Endothelial cell of umbilical vein (primary cell): ENCODE measurements at regions of chr2 and their contacts with region 1.

Region 1: DNA sequence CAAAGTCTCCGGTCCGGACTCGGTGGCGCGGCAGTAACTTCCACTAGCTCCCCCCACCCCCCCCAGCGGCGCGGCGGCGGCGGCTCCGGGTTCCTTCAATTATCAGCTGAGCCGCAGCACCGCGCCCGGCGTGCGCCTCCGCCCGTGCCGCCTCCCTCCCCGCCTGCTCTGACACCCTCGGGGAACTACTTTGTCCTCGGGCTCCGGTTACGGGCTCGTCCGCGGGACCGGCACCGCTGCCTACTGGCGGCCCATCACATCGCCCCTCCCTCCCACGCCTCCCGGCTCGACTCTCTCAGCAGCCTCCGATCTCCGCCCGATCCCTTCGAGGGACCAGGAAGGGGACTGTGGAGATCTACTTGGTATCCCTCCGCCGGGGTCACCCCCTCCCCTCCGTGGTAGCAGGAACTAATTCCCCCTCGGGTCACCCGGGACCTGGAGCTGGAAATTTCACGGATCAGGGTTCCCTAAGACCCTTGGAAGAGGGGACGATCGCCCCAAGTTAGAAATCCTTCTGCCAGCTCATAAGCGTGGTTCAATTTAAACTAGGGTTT is at the start of gene TRIP12:
- DNase-seq: peak; percentile 97
- H3K4me3 ChIP-seq: peak within 1 kb of the TSS; percentile 62 to 98 (median 90)
- H3K27ac ChIP-seq: peak within 1 kb of the TSS; percentile 91
- H3K4me1 ChIP-seq: peaks cover 12% of the 10 kb centered on the region
- H3K27me3 ChIP-seq: no peaks in the 10 kb centered on the region
- CTCF ChIP-seq: no peak
- POLR2A ChIP-seq: peak; percentile 62
- total RNA-seq, gene TRIP12: 256 and 278 TPM in 2 replicates

Region 2: DNA sequence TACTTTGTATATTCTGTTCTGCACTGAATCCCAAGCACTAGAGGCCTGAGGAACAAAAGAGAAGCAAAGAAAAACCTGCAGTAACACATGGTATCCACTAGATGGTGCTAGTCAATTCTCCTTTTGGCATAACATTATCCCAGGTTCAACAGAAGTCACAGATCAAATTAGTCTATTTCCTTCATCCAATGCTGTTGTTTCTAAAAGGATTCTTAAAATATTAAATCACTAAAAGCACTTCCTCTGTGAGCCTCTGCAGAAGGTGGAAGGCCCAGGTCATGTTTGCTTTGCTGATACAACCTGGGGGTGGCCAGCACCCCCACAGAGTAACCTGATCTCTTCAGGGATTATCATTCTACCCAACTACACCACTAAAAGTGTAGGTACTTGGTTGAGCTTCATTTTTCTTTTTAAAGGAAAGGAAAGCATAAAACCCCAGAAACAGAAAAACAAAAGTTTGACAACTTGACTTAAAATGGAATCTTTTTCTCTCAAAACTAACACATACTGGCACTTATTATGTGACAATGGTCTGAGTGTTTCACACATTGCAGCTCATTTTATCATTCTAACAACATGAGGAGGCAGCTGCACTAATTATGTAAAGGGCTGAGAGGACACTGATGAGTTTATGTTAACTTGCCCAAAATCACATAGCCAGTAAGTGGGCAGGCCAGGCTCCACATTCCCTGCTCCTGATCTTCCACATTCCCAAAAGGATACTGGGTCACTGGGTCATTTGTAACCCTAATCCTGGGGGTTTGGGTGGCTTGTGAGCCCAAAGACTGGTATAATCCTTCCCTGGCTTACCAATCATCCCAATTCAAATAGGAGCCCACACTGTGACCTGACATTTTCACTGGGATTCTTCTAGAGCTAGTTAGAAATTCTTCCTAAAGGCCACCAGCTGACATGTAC is 140.9 kb before region 1 on chr2:
- CTCF ChIA-PET with region 1: interaction called, 4 read pairs
- POLR2A ChIA-PET with region 1: no interaction called
- dilution Hi-C with region 1: no loop called
- intact Hi-C with region 1: loop called (anchors 2 kb)
- DNase-seq: peak; percentile 76
- H3K4me3 ChIP-seq: no peak overlapping the region
- H3K27ac ChIP-seq: peak overlapping the region; percentile 31
- H3K4me1 ChIP-seq: peaks cover 13% of the 10 kb centered on the region
- H3K27me3 ChIP-seq: no peaks in the 10 kb centered on the region
- CTCF ChIP-seq: peak; percentile 74 to 75
- POLR2A ChIP-seq: no peak

Region 3: GRCh38 chr2:229852565-229852964 is 69.4 kb before region 1 on chr2:
- CTCF ChIA-PET with region 1: no interaction called
- POLR2A ChIA-PET with region 1: interaction called, 3 read pairs
- dilution Hi-C with region 1: no loop called
- intact Hi-C with region 1: loop called (anchors 1 kb)
- DNase-seq: peak; percentile 97
- H3K4me3 ChIP-seq: peak overlapping the region in 1 of 3 experiments; percentile 37
- H3K27ac ChIP-seq: peak overlapping the region; percentile 77
- H3K4me1 ChIP-seq: peaks cover 57% of the 10 kb centered on the region
- H3K27me3 ChIP-seq: no peaks in the 10 kb centered on the region
- CTCF ChIP-seq: no peak
- POLR2A ChIP-seq: peak; percentile 28

Region 4: DNA sequence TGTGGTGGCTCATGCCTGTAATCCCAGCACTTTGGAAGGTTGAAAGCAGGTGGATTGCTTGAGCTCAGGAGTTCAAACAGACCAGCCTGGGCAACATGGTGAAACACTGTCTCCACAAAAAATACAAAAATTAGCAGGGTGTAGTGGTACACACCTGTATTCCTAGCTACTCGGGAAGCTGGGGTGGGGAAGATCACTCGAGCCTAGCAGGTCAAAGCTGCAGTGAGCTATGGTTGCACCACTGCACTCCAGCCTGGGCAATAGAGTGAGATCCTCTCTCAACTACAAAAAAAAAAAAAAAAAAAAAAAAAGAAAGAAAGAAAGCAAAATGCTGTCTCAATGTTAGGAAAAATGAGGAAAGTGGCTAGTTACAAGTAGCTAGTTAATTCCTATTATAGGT is 56.9 kb before region 1 on chr2:
- CTCF ChIA-PET with region 1: no interaction called
- POLR2A ChIA-PET with region 1: no interaction called
- dilution Hi-C with region 1: no loop called
- intact Hi-C with region 1: no loop called
- DNase-seq: no peak
- H3K4me3 ChIP-seq: no peak overlapping the region
- H3K27ac ChIP-seq: no peak overlapping the region
- H3K4me1 ChIP-seq: no peaks in the 10 kb centered on the region
- H3K27me3 ChIP-seq: no peaks in the 10 kb centered on the region
- CTCF ChIP-seq: no peak
- POLR2A ChIP-seq: no peak

Region 5: DNA sequence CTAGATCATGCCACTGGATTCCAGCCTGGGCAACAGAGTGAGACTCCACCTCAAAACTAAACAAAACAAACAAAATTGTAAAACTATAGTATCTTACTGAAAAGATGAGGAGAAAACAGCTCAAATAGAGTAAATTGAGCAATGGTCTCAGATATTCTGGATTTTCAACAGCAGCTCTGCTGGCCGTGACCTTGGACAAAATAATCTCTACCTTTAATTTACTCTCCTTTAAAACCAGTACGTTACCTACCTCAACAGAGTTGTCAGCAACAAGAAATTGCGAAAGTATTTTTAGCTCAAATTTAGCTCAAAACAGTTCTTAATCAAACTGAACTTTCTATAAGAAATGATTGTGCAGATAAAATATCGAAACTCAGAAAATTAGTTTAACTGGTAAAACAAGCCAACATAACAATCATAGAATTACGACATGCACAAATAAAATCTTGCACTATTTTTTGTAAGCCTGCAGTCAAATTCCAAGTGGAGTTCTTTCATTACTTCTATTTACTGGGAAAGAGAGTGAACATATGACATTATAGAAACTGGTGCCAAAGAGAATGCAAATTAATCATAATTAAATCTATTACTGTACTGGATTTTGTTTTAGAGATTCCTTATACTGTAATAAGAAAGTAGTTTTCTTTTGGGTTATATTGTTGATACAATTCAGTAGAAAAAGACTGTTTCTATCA is 40.9 kb before region 1 on chr2:
- CTCF ChIA-PET with region 1: no interaction called
- POLR2A ChIA-PET with region 1: interaction called, 10 read pairs
- dilution Hi-C with region 1: no loop called
- intact Hi-C with region 1: no loop called
- DNase-seq: no peak
- H3K4me3 ChIP-seq: no peak overlapping the region
- H3K27ac ChIP-seq: no peak overlapping the region
- H3K4me1 ChIP-seq: no peaks in the 10 kb centered on the region
- H3K27me3 ChIP-seq: no peaks in the 10 kb centered on the region
- CTCF ChIP-seq: no peak
- POLR2A ChIP-seq: no peak

Region 6: DNA sequence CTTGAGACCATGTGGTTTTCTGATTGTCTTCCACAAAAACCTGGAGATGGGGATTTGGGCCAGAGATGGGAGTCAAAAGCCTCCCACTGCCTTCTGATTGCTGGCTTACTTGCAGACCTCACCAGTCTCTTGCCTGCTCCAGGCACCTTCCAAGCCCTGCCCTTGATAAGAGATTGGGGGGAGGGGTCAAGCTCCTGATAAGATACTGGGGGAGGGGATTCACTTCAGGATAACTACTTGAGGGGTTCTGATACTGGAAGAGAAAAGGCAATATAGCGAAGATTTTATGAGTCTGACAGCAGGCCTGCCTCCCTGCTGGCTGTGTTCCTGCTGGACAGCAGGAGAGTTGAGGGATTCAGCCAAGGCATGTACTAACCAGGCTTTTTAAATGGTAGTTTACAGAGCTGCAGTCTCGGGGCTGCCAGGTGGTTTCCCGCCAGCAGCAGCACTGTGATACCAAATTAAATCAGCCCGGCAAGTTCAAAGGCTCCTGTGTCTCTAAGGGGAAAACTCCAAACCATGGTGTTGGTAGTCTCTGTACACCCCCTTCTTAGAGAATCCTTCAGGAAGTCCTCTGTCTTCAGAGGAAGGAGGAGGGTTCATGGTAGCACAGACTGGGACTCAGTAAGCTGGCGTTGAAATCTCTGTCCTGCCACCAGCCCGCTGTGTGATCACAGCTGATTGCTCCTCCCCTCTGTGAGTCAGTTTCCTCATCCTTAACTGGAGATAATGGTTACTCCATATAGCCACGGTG is 58.6 kb after region 1 on chr2:
- CTCF ChIA-PET with region 1: interaction called, 3 read pairs
- POLR2A ChIA-PET with region 1: no interaction called
- dilution Hi-C with region 1: no loop called
- intact Hi-C with region 1: loop called (anchors 2 kb)
- DNase-seq: peak; percentile 90
- H3K4me3 ChIP-seq: no peak overlapping the region
- H3K27ac ChIP-seq: peak overlapping the region; percentile 55
- H3K4me1 ChIP-seq: peaks cover 7% of the 10 kb centered on the region
- H3K27me3 ChIP-seq: no peaks in the 10 kb centered on the region
- CTCF ChIP-seq: no peak
- POLR2A ChIP-seq: no peak

Region 7: GRCh38 chr2:230007931-230008707 is 86.2 kb after region 1 on chr2:
- CTCF ChIA-PET with region 1: interaction called, 6 read pairs
- POLR2A ChIA-PET with region 1: no interaction called
- dilution Hi-C with region 1: no loop called
- intact Hi-C with region 1: loop called (anchors 2 kb)
- DNase-seq: peak; percentile 78
- H3K4me3 ChIP-seq: peak overlapping the region in 1 of 3 experiments; percentile 20
- H3K27ac ChIP-seq: no peak overlapping the region
- H3K4me1 ChIP-seq: peaks cover 7% of the 10 kb centered on the region
- H3K27me3 ChIP-seq: no peaks in the 10 kb centered on the region
- CTCF ChIP-seq: peak; percentile 67 to 78
- POLR2A ChIP-seq: no peak

Region 8: DNA sequence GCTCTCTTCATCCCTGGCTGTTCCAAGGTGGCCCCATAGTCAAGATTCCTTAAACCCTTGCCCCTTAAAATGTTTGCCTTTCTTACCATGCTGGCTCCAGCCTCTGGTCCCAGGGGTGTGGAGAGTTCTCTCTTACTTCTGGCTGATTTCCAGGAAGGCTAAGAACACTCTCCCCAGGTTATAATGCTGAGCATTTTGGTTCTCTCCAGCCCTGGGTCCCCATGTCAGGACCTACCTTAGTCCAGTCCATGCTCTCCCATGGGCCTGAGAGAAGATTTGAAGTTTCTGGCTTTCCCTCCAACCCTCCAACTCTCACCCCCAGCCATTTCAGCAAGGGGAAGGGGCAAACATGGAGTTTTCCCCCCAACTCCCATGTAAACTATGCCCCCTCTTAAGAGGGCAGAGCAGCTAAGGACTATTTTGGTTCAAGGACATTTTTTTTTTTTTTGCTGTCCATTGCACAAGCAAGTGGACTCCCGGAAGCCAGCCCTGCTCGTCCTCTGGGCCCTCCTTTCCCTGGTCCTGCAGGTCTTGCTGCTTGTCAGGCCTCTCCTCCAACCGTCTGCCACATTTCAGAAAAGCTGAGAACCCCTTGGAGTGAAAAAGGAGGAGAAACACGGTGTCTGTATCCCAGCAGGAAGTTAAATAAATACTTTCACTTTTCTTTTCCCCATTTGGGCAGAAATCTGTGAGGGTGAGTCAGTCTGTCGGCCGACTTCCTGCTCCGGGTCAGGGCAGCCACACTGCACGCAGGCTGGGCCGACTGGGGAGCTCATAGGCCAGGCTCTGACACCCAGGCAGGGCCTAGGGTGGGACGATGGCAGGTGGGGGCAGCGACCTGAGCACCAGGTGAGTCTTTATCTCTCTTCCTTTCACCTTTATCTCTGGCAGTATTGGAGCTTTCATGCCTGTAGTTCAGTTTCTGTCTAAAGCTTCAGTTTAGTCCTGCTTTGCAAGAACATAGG is 404.8 kb after region 1 on chr2 and contains the start of gene SP140L:
- CTCF ChIA-PET with region 1: no interaction called
- POLR2A ChIA-PET with region 1: no interaction called
- dilution Hi-C with region 1: no loop called
- intact Hi-C with region 1: loop called (anchors 5 kb)
- DNase-seq: peak; percentile 86
- H3K4me3 ChIP-seq: peak within 1 kb of the TSS; percentile 34 to 89 (median 61)
- H3K27ac ChIP-seq: peak within 1 kb of the TSS; percentile 66
- H3K4me1 ChIP-seq: peaks cover 17% of the 10 kb centered on the region
- H3K27me3 ChIP-seq: no peaks in the 10 kb centered on the region
- CTCF ChIP-seq: no peak
- POLR2A ChIP-seq: peak; percentile 21
- total RNA-seq, gene SP140L: 21.4 and 27.3 TPM in 2 replicates